Lower leg skin (tissue), 4 donors: ENCODE measurements at regions of chr1 and their contacts with region 1.

Region 1: DNA sequence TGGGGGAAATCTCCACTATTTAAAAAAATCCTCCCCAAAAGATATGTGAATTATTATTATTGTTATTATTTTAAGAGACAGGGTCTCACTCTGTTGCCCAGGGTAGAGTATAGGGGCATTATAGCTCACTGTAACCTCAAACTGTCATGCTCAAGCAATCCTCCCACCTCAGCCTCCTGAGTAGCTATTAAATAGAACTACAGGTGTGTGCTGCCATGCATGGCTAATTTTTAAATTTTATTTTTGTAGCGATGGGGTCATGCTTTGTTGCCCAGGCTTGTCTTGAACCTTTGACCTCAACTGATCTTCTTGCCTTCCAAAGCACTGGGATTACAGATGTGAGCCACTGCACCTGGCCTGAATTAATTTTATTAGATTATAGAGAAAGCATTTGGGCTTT is 116.8 kb downstream of the RABGAP1L start:
- DNase-seq: no peak
- H3K4me3 ChIP-seq: no peak overlapping the region
- CTCF ChIP-seq: no peak
- POLR2A ChIP-seq: no peak

Region 2: GRCh38 chr1:174736831-174737230 is 460.7 kb after region 1 on chr1:
- intact Hi-C with region 1: loop called (anchors 5 kb)
- DNase-seq: no peak
- H3K4me3 ChIP-seq: no peak overlapping the region
- CTCF ChIP-seq: no peak
- POLR2A ChIP-seq: no peak